ENCODE measurements at regions of chr2 and their contacts with region 1.

Region 1: GRCh38 chr2:130156624-130157004 is 11.7 kb upstream of the CCDC74B start:
- DNase-seq: no peak
- H3K4me3 Mint-ChIP-seq: no peak overlapping the region
- H3K27ac Mint-ChIP-seq: no peak overlapping the region
- H3K4me1 Mint-ChIP-seq: no peaks in the 10 kb centered on the region
- H3K27me3 Mint-ChIP-seq: no peaks in the 10 kb centered on the region
- CTCF ChIP-seq: no peak

Region 2: DNA sequence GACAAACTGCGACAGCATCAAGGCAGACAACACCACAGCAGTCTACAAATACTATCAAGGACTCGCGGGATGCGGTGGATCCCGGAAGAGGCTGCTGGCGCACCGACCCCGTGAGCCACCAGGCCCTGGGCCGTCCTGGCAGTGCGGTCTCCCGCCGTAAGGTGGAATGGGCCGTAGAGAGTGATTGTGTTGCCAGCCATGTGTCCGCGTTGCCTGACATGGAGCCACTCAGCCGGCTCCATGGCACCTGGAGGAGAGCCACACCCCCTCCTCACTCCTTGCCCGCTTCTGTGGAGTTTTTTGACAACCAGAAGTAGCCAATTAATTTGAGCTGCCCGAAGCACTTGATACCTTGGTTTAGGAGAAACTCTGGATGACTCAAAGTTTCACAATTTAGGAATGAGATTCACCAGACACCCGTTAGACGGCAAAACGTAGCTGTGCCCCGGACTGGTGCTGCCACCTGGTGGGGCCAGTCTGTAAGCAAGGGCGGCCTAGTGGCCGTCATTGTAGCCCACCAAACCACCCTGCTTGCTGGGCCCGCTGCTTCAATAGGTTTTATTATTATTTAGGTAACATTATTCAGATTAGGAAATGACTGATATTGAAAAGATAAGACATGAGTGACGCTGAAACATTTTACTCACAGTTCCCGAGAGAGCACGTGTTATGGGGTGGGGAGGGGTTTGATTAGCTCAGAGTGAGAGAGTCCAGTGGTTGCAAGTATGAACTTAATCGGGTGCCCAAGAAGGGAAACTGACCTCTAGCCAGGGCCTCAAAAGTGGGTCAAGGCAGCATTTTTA is 175.9 kb after region 1 on chr2:
- CTCF ChIA-PET with region 1: interaction called, 5 read pairs
- POLR2A ChIA-PET with region 1: no interaction called
- intact Hi-C with region 1: loop called (anchors 1 kb)
- DNase-seq: peak; percentile 84
- H3K4me3 Mint-ChIP-seq: no peak overlapping the region
- H3K27ac Mint-ChIP-seq: no peak overlapping the region
- H3K4me1 Mint-ChIP-seq: peaks cover 15% of the 10 kb centered on the region
- H3K27me3 Mint-ChIP-seq: no peaks in the 10 kb centered on the region
- CTCF ChIP-seq: peak; percentile 95

Measured in MCF 10A (cell line).